B cell (primary cell): ENCODE measurements at regions of chr10 and their contacts with region 1.

Region 1: DNA sequence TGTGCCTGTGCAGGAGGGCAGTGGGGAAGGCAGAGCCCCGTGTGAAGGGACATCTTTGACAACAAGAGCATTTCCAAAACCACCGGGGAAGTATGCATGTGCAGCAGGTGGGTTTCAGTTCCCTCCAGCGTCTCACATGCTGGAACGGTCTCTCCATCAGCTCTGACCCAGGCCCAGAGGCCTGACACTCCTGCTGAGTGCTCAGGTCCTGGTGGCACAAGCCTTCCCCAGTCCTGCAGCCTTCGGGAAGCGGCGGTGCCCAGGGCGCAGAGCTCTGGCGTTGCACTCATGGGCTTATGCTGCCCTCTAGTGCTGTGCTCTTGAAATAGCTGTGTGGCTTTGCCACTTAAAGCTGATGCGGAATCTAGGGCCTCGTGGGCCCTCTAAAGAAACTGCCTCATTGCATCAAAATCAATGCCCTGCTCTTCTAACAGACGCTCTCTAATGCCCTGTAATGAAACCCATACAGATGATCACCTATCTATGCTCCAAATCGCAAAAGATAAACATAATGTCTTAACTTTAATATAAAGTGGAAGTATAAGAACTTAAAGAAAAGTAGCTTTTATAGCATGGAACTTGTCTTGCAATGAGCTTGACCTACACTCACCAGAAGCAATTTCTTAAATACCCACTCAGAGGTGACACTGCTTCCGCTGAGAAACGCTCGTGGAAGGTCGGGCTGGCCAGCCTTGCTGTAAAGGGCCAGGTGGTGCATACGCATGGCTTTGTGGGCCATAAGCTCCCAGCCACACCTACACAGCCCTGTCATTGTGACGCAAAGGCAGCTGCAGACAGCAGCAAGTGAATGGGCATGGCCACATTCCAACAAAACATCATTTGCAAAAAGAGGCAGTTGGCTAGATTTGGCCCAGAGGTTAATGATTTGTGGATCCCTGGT is 38.6 kb downstream of the CLRN3 start:
- DNase-seq: peak; percentile 76
- ATAC-seq: peak; percentile 64
- H3K4me3 ChIP-seq: peak overlapping the region in 1 of 5 experiments; percentile 11
- H3K4me3 Mint-ChIP-seq: peak overlapping the region; percentile 77
- H3K27ac ChIP-seq: peak overlapping the region in 1 of 2 donors; percentile 22
- H3K27ac Mint-ChIP-seq: peak overlapping the region; percentile 66
- H3K4me1 ChIP-seq: peaks cover 27 to 32% of the 10 kb centered on the region in 2 donors
- H3K4me1 Mint-ChIP-seq: peaks cover 37% of the 10 kb centered on the region
- H3K27me3 ChIP-seq: no peaks in the 10 kb centered on the region
- H3K27me3 Mint-ChIP-seq: no peaks in the 10 kb centered on the region
- CTCF ChIP-seq: peak; percentile 78

Region 2: DNA sequence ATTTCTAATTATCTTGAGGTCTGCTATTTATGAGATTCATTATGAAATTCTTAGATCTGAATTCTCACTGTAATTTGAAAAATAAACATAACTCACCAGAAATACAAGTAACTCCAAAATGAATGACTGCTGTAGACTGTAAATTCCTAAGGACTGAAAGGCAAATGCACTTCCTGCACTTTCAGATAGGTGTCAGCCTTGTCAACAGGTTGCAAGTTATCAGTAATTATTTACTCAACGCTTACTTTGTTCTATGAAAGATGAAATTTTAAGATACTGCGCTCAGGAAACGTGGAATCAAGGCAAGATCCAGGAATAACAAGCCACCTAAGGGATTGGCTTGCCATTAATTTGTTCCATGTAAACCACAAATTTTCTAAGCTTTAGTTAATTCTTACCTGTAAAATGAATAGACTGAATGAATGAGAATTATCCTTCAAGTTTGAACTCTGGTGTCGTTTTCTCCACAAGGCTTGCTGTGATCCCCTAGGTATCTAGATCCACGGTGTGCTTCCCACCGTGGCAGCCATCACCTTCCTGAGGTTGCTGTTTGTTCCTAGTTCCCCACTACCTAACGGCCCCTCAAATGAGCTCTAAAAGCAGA is 1985.6 kb before region 1 on chr10:
- CTCF ChIA-PET with region 1: interaction called, 13 read pairs
- POLR2A ChIA-PET with region 1: no interaction called
- intact Hi-C with region 1: no loop called
- DNase-seq: peak; percentile 30
- ATAC-seq: no peak
- H3K4me3 ChIP-seq: no peak overlapping the region
- H3K4me3 Mint-ChIP-seq: no peak overlapping the region
- H3K27ac ChIP-seq: no peak overlapping the region
- H3K27ac Mint-ChIP-seq: no peak overlapping the region
- H3K4me1 ChIP-seq: no peaks in the 10 kb centered on the region
- H3K4me1 Mint-ChIP-seq: no peaks in the 10 kb centered on the region
- H3K27me3 ChIP-seq: no peaks in the 10 kb centered on the region
- H3K27me3 Mint-ChIP-seq: no peaks in the 10 kb centered on the region
- CTCF ChIP-seq: peak; percentile 87

Region 3: DNA sequence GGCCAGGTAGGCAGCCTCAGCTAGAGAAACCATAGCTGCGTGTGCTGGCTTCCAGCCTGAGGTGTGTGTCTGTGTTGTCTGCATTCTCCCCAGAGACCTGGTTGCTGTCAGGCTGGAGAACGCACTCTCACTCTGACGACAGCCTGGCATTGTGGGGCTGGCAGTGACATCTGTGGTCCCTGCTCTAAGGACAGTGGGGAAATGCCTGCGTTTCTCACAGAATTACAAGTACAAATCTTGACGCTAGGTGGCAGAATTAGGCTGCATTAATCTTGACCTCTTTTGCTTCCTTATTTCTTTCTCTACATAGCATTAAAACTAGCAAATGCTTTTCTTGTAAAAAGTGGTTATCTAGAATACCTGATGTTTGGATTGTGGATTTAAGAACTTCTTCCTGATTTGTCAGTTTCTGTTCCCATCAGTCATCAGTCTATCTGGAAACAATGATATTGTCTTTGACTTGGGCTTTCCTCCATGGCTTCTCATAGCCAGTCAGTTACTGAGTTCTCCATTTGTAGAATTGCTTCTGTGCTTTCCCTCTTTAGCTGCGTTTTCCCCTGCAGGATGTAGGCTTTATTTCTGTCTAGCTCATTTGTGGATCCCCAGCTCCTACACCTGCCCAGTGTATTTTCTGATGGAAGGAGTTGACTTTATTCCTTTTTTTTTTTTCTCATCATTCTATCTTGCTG is 1871.7 kb before region 1 on chr10:
- CTCF ChIA-PET with region 1: interaction called, 18 read pairs
- POLR2A ChIA-PET with region 1: no interaction called
- intact Hi-C with region 1: no loop called
- DNase-seq: peak; percentile 85
- ATAC-seq: peak; percentile 76
- H3K4me3 ChIP-seq: no peak overlapping the region
- H3K4me3 Mint-ChIP-seq: no peak overlapping the region
- H3K27ac ChIP-seq: no peak overlapping the region
- H3K27ac Mint-ChIP-seq: peak overlapping the region; percentile 35
- H3K4me1 ChIP-seq: no peaks in the 10 kb centered on the region
- H3K4me1 Mint-ChIP-seq: peaks cover 13% of the 10 kb centered on the region
- H3K27me3 ChIP-seq: no peaks in the 10 kb centered on the region
- H3K27me3 Mint-ChIP-seq: peaks cover 15% of the 10 kb centered on the region
- CTCF ChIP-seq: peak; percentile 85

Region 4: DNA sequence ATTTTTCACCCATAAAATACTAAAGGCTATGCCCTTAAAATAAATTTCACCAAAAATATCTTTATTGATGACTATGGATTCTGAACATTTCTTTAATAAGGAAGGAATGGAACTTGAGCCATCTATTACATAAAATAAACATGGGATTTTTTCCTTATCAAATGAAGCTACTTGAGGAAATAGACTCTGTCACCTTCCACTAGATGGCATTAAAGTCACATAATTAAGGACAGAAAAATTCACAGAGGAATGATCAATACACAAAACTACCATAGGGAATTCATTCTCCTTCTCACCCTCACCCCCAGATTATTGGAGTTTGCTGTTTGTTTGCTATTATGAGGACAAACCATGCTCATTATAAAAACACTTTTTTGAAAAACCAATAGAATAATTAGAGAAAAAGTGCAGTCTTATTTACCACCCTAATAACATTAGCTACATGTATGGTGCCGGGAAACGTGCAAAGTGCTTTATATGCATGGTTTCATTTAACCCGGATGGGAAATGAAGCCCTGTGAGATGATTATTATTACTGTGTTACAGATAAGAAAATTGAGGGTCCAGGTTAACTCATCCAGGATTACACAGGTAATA is 138.2 kb before region 1 on chr10:
- CTCF ChIA-PET with region 1: interaction called, 27 read pairs
- POLR2A ChIA-PET with region 1: no interaction called
- intact Hi-C with region 1: no loop called
- DNase-seq: peak; percentile 47
- ATAC-seq: no peak
- H3K4me3 ChIP-seq: no peak overlapping the region
- H3K4me3 Mint-ChIP-seq: no peak overlapping the region
- H3K27ac ChIP-seq: no peak overlapping the region
- H3K27ac Mint-ChIP-seq: no peak overlapping the region
- H3K4me1 ChIP-seq: no peaks in the 10 kb centered on the region
- H3K4me1 Mint-ChIP-seq: no peaks in the 10 kb centered on the region
- H3K27me3 ChIP-seq: no peaks in the 10 kb centered on the region
- H3K27me3 Mint-ChIP-seq: peaks cover 15% of the 10 kb centered on the region
- CTCF ChIP-seq: peak; percentile 58

Region 5: DNA sequence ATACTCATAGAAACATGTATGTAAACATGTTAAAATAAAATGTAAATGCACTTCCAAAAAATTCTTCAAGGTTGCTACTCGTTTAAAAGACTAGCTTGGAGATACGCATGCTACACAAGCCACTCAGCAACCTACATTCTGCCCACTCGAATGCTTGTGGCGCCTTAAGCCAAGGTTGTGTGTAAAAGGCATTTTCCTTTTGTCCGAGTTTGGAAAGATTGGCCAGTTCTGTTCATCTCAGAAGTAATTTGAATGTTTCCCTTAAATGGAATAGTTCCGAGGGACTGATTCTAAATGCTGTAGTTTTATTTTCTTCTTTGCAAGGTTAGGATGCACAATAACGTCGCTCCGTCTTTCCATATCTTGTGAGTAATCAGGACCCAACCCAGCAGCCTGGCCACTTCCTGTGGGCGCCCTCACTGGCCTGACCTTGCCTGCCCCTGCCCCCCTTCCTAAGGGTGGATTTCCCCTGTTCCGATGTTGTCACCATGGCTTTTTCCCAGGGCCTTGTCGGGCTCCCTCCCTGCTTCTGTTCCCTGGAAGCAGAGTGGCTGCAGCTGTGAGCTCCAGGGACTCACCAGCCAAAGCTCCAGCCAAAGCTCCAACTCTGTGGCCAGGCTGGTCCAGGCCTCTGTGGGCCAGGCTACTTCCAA is 123.4 kb after region 1 on chr10:
- CTCF ChIA-PET with region 1: no interaction called
- POLR2A ChIA-PET with region 1: no interaction called
- intact Hi-C with region 1: no loop called
- DNase-seq: no peak
- ATAC-seq: no peak
- H3K4me3 ChIP-seq: no peak overlapping the region
- H3K4me3 Mint-ChIP-seq: no peak overlapping the region
- H3K27ac ChIP-seq: no peak overlapping the region
- H3K27ac Mint-ChIP-seq: no peak overlapping the region
- H3K4me1 ChIP-seq: peaks cover 0 to 5% of the 10 kb centered on the region in 2 donors
- H3K4me1 Mint-ChIP-seq: peaks cover 5% of the 10 kb centered on the region
- H3K27me3 ChIP-seq: peaks cover 0 to 11% (median 0%) of the 10 kb centered on the region in 4 experiments
- H3K27me3 Mint-ChIP-seq: peaks cover 16% of the 10 kb centered on the region
- CTCF ChIP-seq: no peak

Region 6: DNA sequence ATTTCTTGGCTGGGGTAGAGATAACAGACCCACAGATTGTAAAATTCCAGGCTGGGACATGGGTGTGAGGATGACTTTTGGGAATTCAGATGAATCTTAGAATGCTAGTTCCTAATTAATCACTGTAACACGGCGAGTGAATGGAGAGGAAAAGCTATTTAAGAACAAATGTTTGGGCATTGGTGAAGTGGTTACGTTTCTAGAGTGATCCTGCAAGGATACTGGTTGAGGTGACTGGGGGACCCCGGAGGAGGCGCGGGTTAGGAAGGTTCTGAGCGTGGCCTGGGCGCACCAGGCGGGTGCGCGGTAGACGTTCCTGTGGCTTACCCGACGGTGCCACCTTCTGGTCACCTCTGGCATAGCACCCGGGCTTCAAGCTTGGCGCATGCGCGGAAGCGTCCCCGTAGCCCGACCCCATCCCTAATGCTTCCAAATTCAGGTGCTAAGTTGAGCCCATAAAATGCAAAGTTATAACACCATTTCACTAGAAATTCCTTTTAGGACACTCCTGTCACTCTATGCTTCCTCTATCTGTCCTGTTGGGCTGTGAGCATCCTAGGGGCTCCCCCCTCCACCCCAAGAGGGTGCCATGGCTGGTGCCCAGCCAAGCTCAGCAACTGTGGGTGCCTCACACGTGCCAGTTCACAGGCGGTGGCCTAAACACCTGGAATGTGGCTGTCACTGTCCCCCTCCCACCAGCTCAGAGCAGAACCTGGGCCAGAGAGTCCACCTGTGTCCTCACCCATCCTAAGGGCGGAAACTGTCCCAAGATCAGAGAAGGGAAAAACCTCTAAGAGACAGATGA is 157.3 kb after region 1 on chr10:
- CTCF ChIA-PET with region 1: interaction called, 11 read pairs
- POLR2A ChIA-PET with region 1: no interaction called
- intact Hi-C with region 1: no loop called
- DNase-seq: peak; percentile 90
- ATAC-seq: peak; percentile 99
- H3K4me3 ChIP-seq: no peak overlapping the region
- H3K4me3 Mint-ChIP-seq: peak overlapping the region; percentile 58
- H3K27ac ChIP-seq: no peak overlapping the region
- H3K27ac Mint-ChIP-seq: peak overlapping the region; percentile 54
- H3K4me1 ChIP-seq: peaks cover 4 to 10% of the 10 kb centered on the region in 2 donors
- H3K4me1 Mint-ChIP-seq: peaks cover 10% of the 10 kb centered on the region
- H3K27me3 ChIP-seq: peaks cover 0 to 14% (median 0%) of the 10 kb centered on the region in 4 experiments
- H3K27me3 Mint-ChIP-seq: peaks cover 28% of the 10 kb centered on the region
- CTCF ChIP-seq: peak; percentile 97